Mammary epithelial cell (primary cell): ENCODE measurements at regions of chrX and their contacts with region 1.

Region 1: GRCh38 chrX:56232221-56233082 is at the start of gene KLF8:
- DNase-seq: peak; percentile 71
- H3K4me3 ChIP-seq: peak within 1 kb of the TSS; percentile 47 to 57 (median 53)
- H3K27ac ChIP-seq: peak within 1 kb of the TSS; percentile 49
- H3K4me1 ChIP-seq: peaks cover 3% of the 10 kb centered on the region
- H3K27me3 ChIP-seq: no peaks in the 10 kb centered on the region
- CTCF ChIP-seq: no peak
- total RNA-seq, gene KLF8: 15.6 to 22.0 TPM

Region 2: GRCh38 chrX:55907968-55908607 is 324.4 kb before region 1 on chrX:
- CTCF ChIA-PET with region 1: no interaction called
- dilution Hi-C with region 1: no loop called
- in situ Hi-C with region 1: no loop called
- intact Hi-C with region 1: loop called (anchors 10 kb)
- DNase-seq: peak; percentile 33
- H3K4me3 ChIP-seq: peak overlapping the region; percentile 57 to 60 (median 59)
- H3K27ac ChIP-seq: no peak overlapping the region
- H3K4me1 ChIP-seq: no peaks in the 10 kb centered on the region
- H3K27me3 ChIP-seq: no peaks in the 10 kb centered on the region
- CTCF ChIP-seq: peak in 1 of 2 donors; percentile 42

Region 3: GRCh38 chrX:56219700-56220099 is 12.8 kb before region 1 on chrX:
- CTCF ChIA-PET with region 1: no interaction called
- dilution Hi-C with region 1: no loop called
- in situ Hi-C with region 1: no loop called
- intact Hi-C with region 1: no loop called
- DNase-seq: no peak
- H3K4me3 ChIP-seq: no peak overlapping the region
- H3K27ac ChIP-seq: no peak overlapping the region
- H3K4me1 ChIP-seq: no peaks in the 10 kb centered on the region
- H3K27me3 ChIP-seq: peaks cover 2% of the 10 kb centered on the region
- CTCF ChIP-seq: peak; percentile 29 to 38